SK-N-SH (cell line): ENCODE measurements at regions of chr17 and their contacts with region 1.

Region 1: GRCh38 chr17:19362277-19363113 is at the start of gene B9D1:
- DNase-seq: peak; percentile 99
- H3K4me3 ChIP-seq: peak within 1 kb of the TSS; percentile 72 to 75
- H3K27ac ChIP-seq: peak within 1 kb of the TSS; percentile 83 to 88
- H3K4me1 ChIP-seq: peaks cover 13 to 32% of the 10 kb centered on the region in 2 experiments; a peak in 2 of 4 replicates
- H3K27me3 ChIP-seq: no peaks in the 10 kb centered on the region
- CTCF ChIP-seq: peak; percentile 89
- EP300 ChIP-seq: no peak; a peak in 1 of 4 replicates
- RAD21 ChIP-seq: peak; percentile 97
- polyA plus RNA-seq, gene B9D1: 75.0 and 81.6 TPM in 2 replicates

Region 2: GRCh38 chr17:19284005-19284959 is 78.2 kb before region 1 on chr17:
- CTCF ChIA-PET with region 1: no interaction called
- POLR2A ChIA-PET with region 1: no interaction called
- DNase-seq: no peak
- H3K4me3 ChIP-seq: no peak overlapping the region
- H3K27ac ChIP-seq: no peak overlapping the region
- H3K4me1 ChIP-seq: peaks cover 3 to 4% of the 10 kb centered on the region in 2 experiments; a peak in 1 of 4 replicates
- H3K27me3 ChIP-seq: no peaks in the 10 kb centered on the region
- CTCF ChIP-seq: no peak
- EP300 ChIP-seq: no peak
- RAD21 ChIP-seq: no peak

Region 3: DNA sequence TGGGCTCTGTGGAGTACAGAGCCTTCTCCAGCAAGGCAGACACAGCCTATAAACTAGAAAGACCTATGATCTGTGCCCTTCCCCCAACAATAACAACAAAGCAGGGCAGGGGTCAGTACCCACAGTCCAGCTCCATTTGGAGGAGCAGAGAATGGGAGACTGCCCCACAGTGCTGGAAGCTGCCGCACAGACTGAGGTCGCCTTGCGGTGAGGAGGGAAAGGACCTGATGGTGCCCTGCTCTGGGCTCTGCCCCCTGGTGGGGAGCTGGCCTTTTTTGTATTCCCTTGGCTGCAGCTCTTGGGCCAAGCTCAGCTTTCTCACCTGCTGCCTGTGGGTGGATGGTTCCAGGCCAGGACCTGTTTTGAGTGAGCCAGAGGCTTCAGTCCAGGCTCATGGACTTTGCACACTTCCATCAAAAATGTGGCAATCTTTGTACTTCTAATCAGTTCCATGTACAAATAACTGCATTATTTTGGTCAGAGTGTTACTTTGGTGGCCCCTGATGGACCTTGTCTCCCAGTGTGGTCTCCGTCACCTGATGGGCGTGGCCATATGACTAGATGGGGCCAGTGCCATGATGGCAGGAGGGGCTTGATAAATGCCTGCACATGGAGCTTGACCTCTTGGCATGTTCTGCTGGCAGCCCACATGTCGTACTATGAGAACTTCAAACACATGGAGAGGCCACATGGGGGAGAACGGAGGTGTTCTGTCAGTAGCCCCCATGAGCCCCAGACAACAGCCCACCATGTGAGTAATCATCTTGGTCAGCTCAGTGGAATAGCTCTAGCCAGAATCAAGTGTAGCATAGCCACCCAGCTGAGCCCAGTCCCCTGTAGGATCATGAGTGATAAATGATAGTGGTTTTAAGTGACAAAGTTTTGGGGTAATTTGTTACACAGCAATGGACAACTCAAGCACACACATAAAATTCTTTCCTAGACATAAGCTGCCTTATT is 24.2 kb before region 1 on chr17:
- CTCF ChIA-PET with region 1: interaction called, 20 read pairs
- POLR2A ChIA-PET with region 1: no interaction called
- DNase-seq: peak; percentile 62
- H3K4me3 ChIP-seq: no peak overlapping the region
- H3K27ac ChIP-seq: no peak overlapping the region
- H3K4me1 ChIP-seq: peaks cover 5 to 8% of the 10 kb centered on the region in 2 experiments; a peak in 2 of 4 replicates
- H3K27me3 ChIP-seq: no peaks in the 10 kb centered on the region
- CTCF ChIP-seq: peak; percentile 55
- EP300 ChIP-seq: no peak
- RAD21 ChIP-seq: peak; percentile 43

Region 4: GRCh38 chr17:19386974-19387920 is 24.8 kb after region 1 on chr17 and contains the start of gene MFAP4:
- CTCF ChIA-PET with region 1: interaction called, 30 read pairs
- POLR2A ChIA-PET with region 1: interaction called, 10 read pairs
- DNase-seq: peak; percentile 91
- H3K4me3 ChIP-seq: peak within 1 kb of the TSS; percentile 55 to 69
- H3K27ac ChIP-seq: peak within 1 kb of the TSS; percentile 98 to 99
- H3K4me1 ChIP-seq: peaks cover 58 to 90% of the 10 kb centered on the region in 2 experiments
- H3K27me3 ChIP-seq: no peaks in the 10 kb centered on the region
- CTCF ChIP-seq: no peak
- EP300 ChIP-seq: peak; percentile 71 to 90
- RAD21 ChIP-seq: 0 out of 2 replicates have a peak, but pooled peaks have one; percentile 3
- polyA plus RNA-seq, gene MFAP4: 112 and 120 TPM in 2 replicates

Region 5: GRCh38 chr17:19410875-19411620 is 48.6 kb after region 1 on chr17 and contains the start of gene RNF112:
- CTCF ChIA-PET with region 1: interaction called, 79 read pairs
- POLR2A ChIA-PET with region 1: interaction called, 4 read pairs
- DNase-seq: peak; percentile 92
- H3K4me3 ChIP-seq: peak within 1 kb of the TSS; percentile 50 to 78
- H3K27ac ChIP-seq: peak within 1 kb of the TSS; percentile 53 to 86; a peak in 3 of 4 replicates
- H3K4me1 ChIP-seq: peaks cover 17 to 40% of the 10 kb centered on the region in 2 experiments; a peak in 3 of 4 replicates
- H3K27me3 ChIP-seq: no peaks in the 10 kb centered on the region
- CTCF ChIP-seq: peak; percentile 47
- EP300 ChIP-seq: no peak
- RAD21 ChIP-seq: peak; percentile 70
- polyA plus RNA-seq, gene RNF112: 22.6 and 26.9 TPM in 2 replicates

Region 6: GRCh38 chr17:19433727-19434340 is 71.3 kb after region 1 on chr17:
- CTCF ChIA-PET with region 1: interaction called, 21 read pairs
- POLR2A ChIA-PET with region 1: no interaction called
- DNase-seq: no peak
- H3K4me3 ChIP-seq: no peak overlapping the region
- H3K27ac ChIP-seq: no peak overlapping the region
- H3K4me1 ChIP-seq: peaks cover 0 to 7% of the 10 kb centered on the region in 2 experiments; a peak in 1 of 4 replicates
- H3K27me3 ChIP-seq: no peaks in the 10 kb centered on the region
- CTCF ChIP-seq: no peak
- EP300 ChIP-seq: no peak
- RAD21 ChIP-seq: no peak

Region 7: DNA sequence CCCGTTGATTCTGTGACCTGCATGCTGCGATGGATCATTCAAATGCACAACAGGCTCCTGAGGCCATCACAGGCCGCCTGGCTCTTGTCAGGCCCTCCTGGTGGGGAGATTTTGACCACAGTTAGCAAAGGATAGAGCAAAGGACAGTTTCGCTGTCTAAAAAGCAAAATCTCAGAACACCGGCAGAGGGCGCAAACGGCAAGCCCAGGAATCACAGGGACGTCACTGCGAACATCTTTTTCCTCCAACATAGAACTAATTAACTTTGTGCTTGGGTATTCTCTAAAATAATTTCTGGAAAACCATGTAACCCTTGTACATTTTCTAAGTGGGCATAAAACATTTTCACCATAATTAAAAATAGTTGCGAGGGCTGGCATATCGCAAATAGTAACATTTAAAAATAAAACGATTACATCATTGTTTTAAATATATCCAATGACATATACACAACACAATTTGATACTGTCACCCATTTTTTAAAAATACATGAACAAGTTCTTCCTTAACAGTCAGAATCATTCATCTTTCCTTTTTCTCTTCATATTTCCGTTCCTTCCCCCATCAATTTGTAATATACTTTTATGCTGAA is 151.5 kb after region 1 on chr17:
- CTCF ChIA-PET with region 1: interaction called, 14 read pairs
- POLR2A ChIA-PET with region 1: no interaction called
- DNase-seq: peak; percentile 74
- H3K4me3 ChIP-seq: no peak overlapping the region; a peak in 1 of 4 replicates
- H3K27ac ChIP-seq: peak overlapping the region in 1 of 2 experiments; percentile 16; a peak in 1 of 4 replicates
- H3K4me1 ChIP-seq: peaks cover 0 to 5% of the 10 kb centered on the region in 2 experiments; a peak in 1 of 4 replicates
- H3K27me3 ChIP-seq: no peaks in the 10 kb centered on the region
- CTCF ChIP-seq: peak; percentile 97
- EP300 ChIP-seq: no peak
- RAD21 ChIP-seq: peak; percentile 98

Region 8: GRCh38 chr17:19569785-19570543 is 207.5 kb after region 1 on chr17:
- CTCF ChIA-PET with region 1: no interaction called
- POLR2A ChIA-PET with region 1: no interaction called
- DNase-seq: no peak
- H3K4me3 ChIP-seq: no peak overlapping the region
- H3K27ac ChIP-seq: no peak overlapping the region
- H3K4me1 ChIP-seq: no peaks in the 10 kb centered on the region; a peak in 1 of 4 replicates
- H3K27me3 ChIP-seq: no peaks in the 10 kb centered on the region
- CTCF ChIP-seq: no peak
- EP300 ChIP-seq: no peak
- RAD21 ChIP-seq: no peak